Motor neuron (in vitro differentiated cells): ENCODE measurements at regions of chr13 and their contacts with region 1.

Region 1: GRCh38 chr13:112942689-112943308 is 26.2 kb upstream of the MCF2L start:
- ATAC-seq: peak; percentile 81 to 91 (median 85)
- H3K4me3 ChIP-seq: peak overlapping the region; percentile 32 to 55 (median 48)
- H3K27ac ChIP-seq: no peak overlapping the region
- H3K4me1 ChIP-seq: no peaks in the 10 kb centered on the region

Region 2: GRCh38 chr13:112714376-112715174 is 228.2 kb before region 1 on chr13:
- in situ Hi-C with region 1: no loop called
- ATAC-seq: no peak
- H3K4me3 ChIP-seq: no peak overlapping the region
- H3K27ac ChIP-seq: no peak overlapping the region
- H3K4me1 ChIP-seq: peaks cover 16 to 26% of the 10 kb centered on the region in 2 donors

Region 3: GRCh38 chr13:113029487-113030258 is 86.9 kb after region 1 on chr13:
- in situ Hi-C with region 1: loop called in 2 of 9 experiments (anchors 25 kb)
- ATAC-seq: peak; percentile 41 to 86 (median 79)
- H3K4me3 ChIP-seq: no peak overlapping the region
- H3K27ac ChIP-seq: no peak overlapping the region
- H3K4me1 ChIP-seq: no peaks in the 10 kb centered on the region

Region 4: DNA sequence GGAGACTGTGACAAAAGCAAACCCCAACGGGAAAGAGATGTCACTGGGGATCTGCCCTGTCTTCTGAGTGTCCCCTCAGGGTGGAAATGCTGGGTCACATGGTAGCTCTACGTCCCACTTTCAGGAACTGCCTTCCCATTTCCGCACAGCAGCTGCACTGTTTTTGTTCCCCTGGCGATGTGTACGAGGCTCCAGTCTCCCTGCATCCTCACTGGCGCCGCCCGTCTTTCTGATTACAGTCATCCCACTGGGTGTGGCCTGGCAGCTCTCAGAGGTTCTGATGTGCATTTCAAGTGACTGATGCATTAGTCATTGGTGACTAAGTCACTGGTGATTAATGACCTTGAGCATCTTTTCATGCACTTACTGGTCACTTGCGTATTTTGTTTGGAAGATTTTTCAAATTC is 244.5 kb after region 1 on chr13:
- in situ Hi-C with region 1: loop called in 1 of 9 experiments (anchors 25 kb)
- ATAC-seq: peak; percentile 95 to 99 (median 98)
- H3K4me3 ChIP-seq: no peak overlapping the region
- H3K27ac ChIP-seq: no peak overlapping the region
- H3K4me1 ChIP-seq: no peaks in the 10 kb centered on the region

Region 5: DNA sequence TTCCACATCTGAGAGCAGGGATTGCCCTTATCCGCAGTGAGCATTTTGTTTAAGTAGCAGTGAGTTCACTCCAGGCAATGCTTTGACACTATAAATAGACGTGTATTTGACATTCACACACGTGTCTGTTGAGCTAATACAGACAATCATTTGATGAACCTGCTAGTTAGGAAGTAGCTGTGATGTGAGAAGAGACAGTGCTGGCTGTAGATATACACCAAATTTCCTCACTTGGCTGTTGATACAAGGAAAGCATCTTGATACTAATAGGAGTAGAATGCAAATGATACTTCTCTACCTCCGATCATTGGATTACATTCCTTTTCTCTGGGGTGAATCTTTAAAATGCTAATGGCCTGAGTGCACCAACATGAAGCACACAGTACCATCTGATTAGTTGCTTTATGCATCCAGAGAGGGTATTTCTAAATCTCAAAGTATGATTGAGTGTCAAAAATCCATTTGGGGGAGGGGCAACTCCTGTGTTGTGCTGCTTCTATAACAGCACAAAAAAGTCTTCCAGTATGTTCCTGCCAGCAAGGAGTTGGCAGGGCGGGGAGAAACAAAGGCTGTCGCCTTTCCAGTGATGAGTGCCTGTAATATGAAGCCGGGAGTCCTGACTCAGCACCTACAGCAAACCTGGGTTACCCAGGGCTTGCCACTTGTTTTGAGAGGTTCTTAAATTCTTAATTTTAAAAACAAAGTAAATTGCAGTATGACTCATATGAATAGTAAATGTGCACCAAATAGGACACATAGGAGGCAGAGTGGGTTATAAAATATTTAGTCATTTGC is 273.7 kb after region 1 on chr13:
- in situ Hi-C with region 1: no loop called
- ATAC-seq: peak; percentile 75 to 84 (median 82)
- H3K4me3 ChIP-seq: no peak overlapping the region
- H3K27ac ChIP-seq: peak overlapping the region in 1 of 2 donors; percentile 56
- H3K4me1 ChIP-seq: peaks cover 14 to 15% of the 10 kb centered on the region in 2 donors